Calu3 (cell line): ENCODE measurements at regions of chrX and their contacts with region 1.

Region 1: GRCh38 chrX:101097546-101098453 is at the start of gene CENPI:
- DNase-seq: peak; percentile 95
- H3K4me3 Mint-ChIP-seq: peak within 1 kb of the TSS; percentile 77
- H3K27ac Mint-ChIP-seq: peak within 1 kb of the TSS; percentile 43
- H3K4me1 Mint-ChIP-seq: peaks cover 20% of the 10 kb centered on the region
- H3K27me3 Mint-ChIP-seq: no peaks in the 10 kb centered on the region
- CTCF ChIP-seq: no peak
- total RNA-seq, gene CENPI: 26.1 and 28.1 TPM in 2 replicates

Region 2: DNA sequence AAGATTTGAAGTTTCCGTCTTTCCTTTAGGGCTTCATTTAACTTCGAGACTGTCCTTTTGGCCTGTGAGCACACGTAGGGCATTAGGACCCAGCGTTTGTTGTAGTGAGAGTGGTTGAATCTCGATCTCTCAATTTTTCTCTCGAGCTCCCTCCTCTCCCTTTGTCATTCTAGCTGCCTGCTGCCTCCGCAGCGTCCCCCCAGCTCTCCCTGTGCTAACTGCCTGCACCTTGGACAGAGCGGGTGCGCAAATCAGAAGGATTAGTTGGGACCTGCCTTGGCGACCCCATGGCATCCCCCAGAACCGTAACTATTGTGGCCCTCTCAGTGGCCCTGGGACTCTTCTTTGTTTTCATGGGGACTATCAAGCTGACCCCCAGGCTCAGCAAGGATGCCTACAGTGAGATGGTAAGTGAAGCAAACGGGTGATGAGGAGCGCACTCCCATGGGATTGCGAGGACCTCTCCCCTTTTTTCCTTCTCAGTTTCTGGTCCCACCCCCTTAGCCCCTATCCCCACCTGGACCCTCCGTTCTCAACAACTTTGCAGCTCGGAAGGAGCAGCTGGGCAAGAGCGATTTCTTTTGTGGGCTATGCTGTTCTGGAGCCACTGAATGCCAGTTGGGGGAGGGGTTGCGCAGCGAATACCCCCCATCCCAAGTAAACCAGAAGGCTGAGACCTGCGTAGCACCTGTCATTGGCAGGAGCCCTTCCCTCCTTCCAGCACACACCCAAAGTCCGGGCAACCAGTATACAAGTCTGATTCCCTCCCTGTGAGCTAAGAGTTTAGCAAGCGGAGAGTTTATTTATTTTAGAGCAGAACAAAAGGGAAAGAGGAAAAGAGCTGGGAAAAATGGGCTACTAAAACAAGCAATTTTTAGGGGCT is 18.8 kb before region 1 on chrX and contains the start of gene TMEM35A:
- CTCF ChIA-PET with region 1: no interaction called
- intact Hi-C with region 1: loop called (anchors 1 kb)
- DNase-seq: no peak
- H3K4me3 Mint-ChIP-seq: no peak within 1 kb of the TSS
- H3K27ac Mint-ChIP-seq: no peak within 1 kb of the TSS
- H3K4me1 Mint-ChIP-seq: no peaks in the 10 kb centered on the region
- H3K27me3 Mint-ChIP-seq: peaks cover 15% of the 10 kb centered on the region
- CTCF ChIP-seq: no peak
- total RNA-seq, gene TMEM35A: not detected in 2 replicates

Region 3: GRCh38 chrX:101485199-101485949 is 387.6 kb after region 1 on chrX and contains the start of gene ARMCX4:
- CTCF ChIA-PET with region 1: no interaction called
- intact Hi-C with region 1: no loop called
- DNase-seq: peak; percentile 39
- H3K4me3 Mint-ChIP-seq: peak within 1 kb of the TSS; percentile 77
- H3K27ac Mint-ChIP-seq: peak within 1 kb of the TSS; percentile 28
- H3K4me1 Mint-ChIP-seq: peaks cover 12% of the 10 kb centered on the region
- H3K27me3 Mint-ChIP-seq: peaks cover 14% of the 10 kb centered on the region
- CTCF ChIP-seq: no peak
- total RNA-seq, gene ARMCX4: 1.5 and 1.8 TPM in 2 replicates